HepG2 (cell line): ENCODE measurements at regions of chr5 and their contacts with region 1.

Region 1: DNA sequence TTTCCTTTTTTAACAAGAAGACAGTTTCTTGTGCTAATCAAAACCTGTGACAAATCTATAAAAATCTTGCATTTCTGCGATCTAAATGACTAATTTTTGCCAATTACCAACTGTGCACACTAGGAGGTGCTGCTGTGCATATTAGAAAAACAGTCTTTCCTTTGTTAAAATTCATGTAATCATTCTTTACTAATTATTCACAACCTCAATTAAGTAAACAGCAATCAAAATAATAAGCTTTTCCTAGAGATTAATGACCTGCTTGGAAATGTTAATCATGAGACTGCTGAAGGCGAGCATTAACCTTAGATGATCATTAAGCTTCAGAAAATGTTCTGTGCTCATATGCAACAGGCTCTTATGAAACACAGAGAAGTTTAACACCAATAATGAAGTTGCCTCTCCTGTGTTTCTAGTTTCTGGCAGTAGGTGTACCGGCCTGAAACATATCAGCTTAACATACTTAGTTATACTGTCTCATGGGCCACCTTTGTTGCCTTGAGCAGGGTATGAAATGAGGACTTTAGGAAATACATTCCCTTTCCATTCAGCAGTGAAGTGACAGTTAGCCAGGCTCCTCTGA is 17.7 kb downstream of the RFESD start:
- DNase-seq: peak; percentile 25
- ATAC-seq: peak; percentile 43; the same call in 1 of the 3 replicates
- H3K4me3 ChIP-seq: no peak overlapping the region
- H3K27ac ChIP-seq: no peak overlapping the region
- H3K4me1 ChIP-seq: peaks cover 6% of the 10 kb centered on the region; the same call in 1 of the 2 replicates
- H3K27me3 ChIP-seq: no peaks in the 10 kb centered on the region
- CTCF ChIP-seq: peak; percentile 68
- EP300 ChIP-seq: no peak
- POLR2A ChIP-seq: no peak
- RAD21 ChIP-seq: peak; percentile 33; the same call in 1 of the 2 replicates

Region 2: GRCh38 chr5:95697781-95698681 is 33.7 kb after region 1 on chr5:
- CTCF ChIA-PET with region 1: no interaction called
- POLR2A ChIA-PET with region 1: no interaction called
- in situ Hi-C with region 1: no loop called
- intact Hi-C with region 1: loop called (anchors 2 kb)
- DNase-seq: no peak
- ATAC-seq: no peak
- H3K4me3 ChIP-seq: no peak overlapping the region
- H3K27ac ChIP-seq: no peak overlapping the region
- H3K4me1 ChIP-seq: peaks cover 8% of the 10 kb centered on the region; the same call in 1 of the 2 replicates
- H3K27me3 ChIP-seq: peaks cover 0 to 5% of the 10 kb centered on the region in 2 experiments; a peak in 1 of 5 replicates
- CTCF ChIP-seq: no peak
- EP300 ChIP-seq: no peak
- POLR2A ChIP-seq: no peak
- RAD21 ChIP-seq: no peak

Region 3: DNA sequence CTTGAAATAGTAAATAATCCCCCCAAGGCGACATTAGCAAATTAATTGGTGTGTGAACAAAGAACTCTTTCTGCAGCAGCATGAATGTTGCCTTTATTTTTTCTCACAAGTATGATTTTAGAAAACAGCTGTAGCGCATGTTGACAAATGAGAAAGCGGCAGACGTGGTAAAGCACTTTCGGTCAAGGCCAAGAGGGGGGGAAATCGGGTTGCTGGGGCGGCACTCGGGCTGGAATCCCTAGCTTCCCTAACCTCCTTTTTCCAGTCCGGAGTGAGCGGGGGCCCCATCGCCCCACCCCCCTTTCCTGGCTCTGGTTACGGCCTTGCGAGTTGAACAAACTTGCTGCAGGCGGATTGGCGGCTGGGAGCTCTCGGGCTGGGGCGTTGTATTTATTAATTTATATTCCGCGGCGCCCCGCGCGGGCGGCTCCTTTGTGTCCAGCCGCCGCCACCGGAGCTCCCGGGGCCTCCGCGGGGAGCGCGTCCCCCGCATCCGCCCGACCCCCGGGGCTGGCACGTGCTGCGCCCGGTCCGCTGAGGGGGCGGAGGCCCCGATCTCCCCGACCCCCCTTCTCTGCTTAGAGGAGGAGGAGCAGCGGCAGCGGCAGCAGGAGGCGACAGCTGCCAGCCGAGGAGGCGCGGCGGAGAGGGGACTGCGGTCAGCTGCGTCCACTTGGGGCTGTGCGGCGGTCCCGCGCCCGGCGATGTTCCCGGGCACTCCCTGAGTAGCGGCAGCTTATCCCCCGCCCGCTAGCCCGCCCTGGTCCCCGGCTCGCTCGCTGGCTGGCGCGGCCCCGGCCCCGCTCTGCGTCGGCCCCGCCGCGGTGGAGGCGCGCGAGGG is 66.7 kb after region 1 on chr5 and contains the start of gene RHOBTB3:
- CTCF ChIA-PET with region 1: no interaction called
- POLR2A ChIA-PET with region 1: interaction called, 3 read pairs
- in situ Hi-C with region 1: no loop called
- intact Hi-C with region 1: loop called (anchors 2 kb)
- DNase-seq: peak; percentile 79
- ATAC-seq: peak; percentile 87
- H3K4me3 ChIP-seq: peak within 1 kb of the TSS; percentile 80 to 93 (median 87)
- H3K27ac ChIP-seq: peak within 1 kb of the TSS; percentile 65
- H3K4me1 ChIP-seq: peaks cover 72% of the 10 kb centered on the region
- H3K27me3 ChIP-seq: no peaks in the 10 kb centered on the region
- CTCF ChIP-seq: peak; percentile 17; the same call in 1 of the 2 replicates
- EP300 ChIP-seq: peak in 1 of 2 experiments; percentile 49; a peak in 1 of 4 replicates
- POLR2A ChIP-seq: peak; percentile 41 to 44; a peak in 2 of 4 replicates
- RAD21 ChIP-seq: peak; percentile 49; the same call in 1 of the 2 replicates
- total RNA-seq, gene RHOBTB3: 35.4 and 39.6 TPM in 2 replicates

Region 4: GRCh38 chr5:95781101-95781583 is 116.8 kb after region 1 on chr5:
- CTCF ChIA-PET with region 1: interaction called, 3 read pairs
- POLR2A ChIA-PET with region 1: no interaction called
- in situ Hi-C with region 1: no loop called
- intact Hi-C with region 1: loop called (anchors 2 kb)
- DNase-seq: peak; percentile 73
- ATAC-seq: peak; percentile 100
- H3K4me3 ChIP-seq: no peak overlapping the region
- H3K27ac ChIP-seq: no peak overlapping the region
- H3K4me1 ChIP-seq: peaks cover 6% of the 10 kb centered on the region; the same call in 1 of the 2 replicates
- H3K27me3 ChIP-seq: no peaks in the 10 kb centered on the region
- CTCF ChIP-seq: peak; percentile 89
- EP300 ChIP-seq: no peak
- POLR2A ChIP-seq: no peak
- RAD21 ChIP-seq: peak; percentile 94

Region 5: DNA sequence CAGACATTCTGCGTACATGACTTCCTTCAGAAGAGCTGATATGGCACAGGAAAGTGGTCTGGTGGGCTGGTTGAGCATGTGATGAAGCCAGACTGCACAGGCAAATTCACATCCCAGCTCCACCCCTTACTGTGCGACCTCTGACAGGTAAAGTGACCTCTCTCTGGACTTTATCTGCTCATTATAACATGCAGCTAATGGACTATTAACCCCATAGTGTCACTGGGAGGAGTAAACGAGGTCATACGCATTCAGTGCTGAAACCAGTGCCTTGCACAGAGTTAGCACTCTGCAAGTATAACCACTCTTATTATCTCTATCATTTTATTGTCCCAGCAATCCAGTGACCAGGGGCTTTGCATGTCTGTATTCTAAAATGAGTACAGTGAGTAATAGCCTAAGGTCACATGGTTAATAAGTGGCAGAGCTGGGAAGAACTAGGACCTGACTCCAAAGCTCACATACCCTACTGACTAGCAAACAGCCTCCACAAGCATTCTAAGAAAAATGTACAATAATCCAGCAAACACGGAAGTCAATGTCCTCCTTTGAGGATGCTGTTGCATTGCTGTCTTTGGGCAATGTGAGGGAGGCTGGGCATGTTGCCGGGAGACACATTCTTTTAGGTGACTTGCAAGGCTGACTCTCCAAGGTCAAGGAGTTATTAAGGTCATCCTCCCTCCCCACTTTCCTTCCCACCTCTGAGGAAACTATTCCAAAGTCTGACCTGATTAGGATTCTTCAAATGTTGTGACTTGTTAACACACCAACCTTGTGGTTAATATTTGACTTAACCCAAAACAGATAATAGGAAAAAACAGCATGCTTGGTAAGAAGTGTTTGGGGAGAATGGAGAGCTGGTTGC is 139.2 kb after region 1 on chr5:
- CTCF ChIA-PET with region 1: no interaction called
- POLR2A ChIA-PET with region 1: no interaction called
- in situ Hi-C with region 1: no loop called
- intact Hi-C with region 1: no loop called
- DNase-seq: peak; percentile 84
- ATAC-seq: peak; percentile 97
- H3K4me3 ChIP-seq: peak overlapping the region in 1 of 3 experiments; percentile 39; a peak in 2 of 6 replicates
- H3K27ac ChIP-seq: peak overlapping the region; percentile 76
- H3K4me1 ChIP-seq: peaks cover 72% of the 10 kb centered on the region
- H3K27me3 ChIP-seq: no peaks in the 10 kb centered on the region
- CTCF ChIP-seq: no peak
- EP300 ChIP-seq: peak in 1 of 2 experiments; percentile 24; a peak in 1 of 4 replicates
- POLR2A ChIP-seq: no peak
- RAD21 ChIP-seq: no peak